ENCODE measurements at regions of chr6 and their contacts with region 1.

Region 1: DNA sequence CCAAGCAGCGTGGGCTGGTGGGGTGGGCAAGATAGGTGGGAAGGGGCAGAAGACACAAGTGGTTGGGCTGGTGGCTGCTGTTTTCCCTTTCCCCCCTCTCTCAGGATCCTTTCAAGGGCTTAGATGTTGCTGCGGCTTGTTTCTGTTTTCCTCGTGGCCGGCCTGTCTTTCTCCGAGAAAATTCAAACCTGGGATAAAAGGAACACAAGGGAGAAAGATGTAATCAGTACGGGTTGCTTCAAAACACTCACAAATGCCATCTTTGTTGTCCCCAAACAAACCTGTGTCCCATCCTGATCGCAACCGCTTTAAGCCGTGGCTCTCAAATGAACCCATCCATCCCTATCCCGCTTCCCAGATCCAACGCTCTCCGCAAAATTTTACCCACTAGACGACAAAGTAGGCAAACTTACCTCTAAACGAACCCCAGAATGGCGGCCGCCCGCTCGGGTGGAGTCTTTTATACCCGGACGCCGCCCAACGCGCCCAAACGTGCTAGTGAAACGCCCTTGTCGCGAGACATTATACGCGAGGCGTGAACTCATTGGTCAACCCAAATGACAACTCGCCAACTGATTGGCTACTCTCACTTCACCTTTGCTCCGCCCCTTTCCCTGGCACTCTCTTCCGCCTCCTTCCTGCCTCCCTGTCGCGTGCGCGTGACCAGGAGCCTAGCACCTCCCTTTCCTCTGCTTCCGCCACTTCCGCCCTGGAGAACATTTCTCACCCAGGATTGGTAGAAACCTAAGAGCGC is at the start of gene PPP1R10:
- DNase-seq: peak; percentile 86
- ATAC-seq: peak; percentile 77
- H3K4me3 Mint-ChIP-seq: peak within 1 kb of the TSS; percentile 99
- H3K27ac Mint-ChIP-seq: peak within 1 kb of the TSS; percentile 99
- H3K4me1 Mint-ChIP-seq: peaks cover 35% of the 10 kb centered on the region
- H3K27me3 Mint-ChIP-seq: no peaks in the 10 kb centered on the region
- CTCF ChIP-seq: no peak
- total RNA-seq, gene PPP1R10: 85.6 and 112 TPM in 2 replicates

Region 2: DNA sequence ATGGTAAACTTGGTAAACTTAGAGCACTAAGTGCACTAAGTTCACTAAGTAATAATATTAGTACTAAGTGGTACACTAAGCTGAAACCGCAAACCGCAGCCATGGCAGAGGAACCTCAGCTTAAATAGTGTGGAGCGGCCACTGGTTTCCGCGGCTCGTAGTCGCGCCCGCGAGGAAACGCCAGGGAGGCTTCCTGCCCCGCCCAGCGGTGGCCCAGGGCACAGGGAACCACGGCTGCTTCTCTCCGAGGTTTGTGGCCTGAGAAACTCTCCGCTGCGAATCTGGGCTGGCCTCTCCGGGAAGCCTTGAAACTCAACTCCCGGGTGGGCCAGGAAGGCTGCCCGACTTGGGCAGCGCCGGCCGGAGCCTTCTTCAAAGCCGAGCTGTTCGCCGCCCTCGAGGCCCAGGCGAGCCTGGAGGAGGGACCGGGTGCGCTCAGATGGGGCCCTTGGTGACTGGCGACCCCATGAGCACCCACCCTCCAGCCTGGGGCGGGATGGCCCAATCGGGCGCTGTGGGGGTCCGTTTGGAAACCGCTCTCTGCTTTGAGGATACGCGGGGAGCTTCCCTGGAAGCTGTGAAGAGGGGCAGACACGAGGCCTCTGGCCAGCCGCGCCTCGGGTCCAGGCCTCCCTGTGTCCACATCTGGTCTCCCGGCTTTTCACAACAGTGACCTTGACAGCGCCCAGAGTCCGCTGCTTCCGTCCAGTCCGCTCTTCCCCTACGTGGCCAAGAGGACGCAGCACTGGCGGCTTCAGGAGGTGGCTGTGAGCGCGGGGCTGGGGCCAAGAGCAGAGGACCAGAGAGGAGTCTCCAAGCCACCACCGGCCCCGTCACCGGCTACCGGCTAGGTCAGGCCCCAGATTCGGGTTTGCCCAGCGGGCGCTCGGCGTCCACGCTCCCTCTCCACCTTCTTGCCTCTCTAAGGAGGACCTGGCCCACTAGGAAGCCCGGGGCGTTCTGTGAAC is 153.1 kb before region 1 on chr6:
- CTCF ChIA-PET with region 1: no interaction called
- POLR2A ChIA-PET with region 1: interaction called, 10 read pairs
- intact Hi-C with region 1: no loop called
- DNase-seq: peak; percentile 46
- ATAC-seq: peak; percentile 48
- H3K4me3 Mint-ChIP-seq: peak overlapping the region; percentile 58
- H3K27ac Mint-ChIP-seq: no peak overlapping the region
- H3K4me1 Mint-ChIP-seq: peaks cover 37% of the 10 kb centered on the region
- H3K27me3 Mint-ChIP-seq: peaks cover 68% of the 10 kb centered on the region
- CTCF ChIP-seq: no peak

Region 3: DNA sequence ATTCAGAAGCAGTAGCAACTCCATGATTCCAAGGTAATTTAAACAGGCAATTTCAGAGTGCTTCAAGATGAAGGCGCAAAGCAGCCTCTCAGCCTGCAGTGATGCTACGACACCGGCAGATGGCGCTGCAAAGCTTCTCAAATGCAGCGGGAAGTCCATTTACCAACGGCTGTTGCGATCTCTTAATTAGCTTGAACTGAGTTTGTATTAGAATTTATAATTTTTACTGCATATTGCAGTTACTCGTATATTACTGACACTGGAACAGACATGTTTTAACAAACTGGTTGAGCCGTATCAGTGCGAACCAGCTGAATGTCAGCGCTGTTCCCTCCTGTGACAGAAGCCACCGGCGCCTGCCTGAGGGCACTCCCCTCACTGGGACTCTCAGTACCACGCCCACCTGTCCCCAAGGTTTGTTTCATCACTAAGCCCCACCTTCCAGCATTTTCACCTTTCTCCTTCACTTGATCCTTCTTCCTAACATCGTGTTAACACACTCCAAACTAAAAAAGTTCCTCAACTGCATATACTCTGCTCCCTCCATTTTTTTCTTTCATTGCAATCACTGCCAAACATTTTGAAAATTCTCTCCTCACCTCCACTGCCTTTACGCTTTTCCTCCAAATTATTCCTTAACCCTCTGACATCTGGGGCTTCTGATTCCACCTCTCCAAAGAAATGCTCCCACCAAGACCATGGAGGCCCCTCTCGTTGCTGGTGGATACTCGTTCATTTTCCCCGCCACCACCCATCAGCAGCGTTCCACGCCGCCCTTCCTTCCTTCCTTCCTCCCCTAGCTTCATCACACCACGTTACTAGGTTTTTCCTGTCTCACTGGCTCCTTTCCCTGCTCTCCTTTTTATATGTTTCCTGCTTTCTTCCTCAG is 75.2 kb before region 1 on chr6:
- CTCF ChIA-PET with region 1: interaction called, 7 read pairs
- POLR2A ChIA-PET with region 1: interaction called, 29 read pairs
- intact Hi-C with region 1: no loop called
- DNase-seq: peak; percentile 65
- ATAC-seq: peak; percentile 84
- H3K4me3 Mint-ChIP-seq: peak overlapping the region; percentile 81
- H3K27ac Mint-ChIP-seq: peak overlapping the region; percentile 81
- H3K4me1 Mint-ChIP-seq: peaks cover 30% of the 10 kb centered on the region
- H3K27me3 Mint-ChIP-seq: no peaks in the 10 kb centered on the region
- CTCF ChIP-seq: peak; percentile 98

Region 4: DNA sequence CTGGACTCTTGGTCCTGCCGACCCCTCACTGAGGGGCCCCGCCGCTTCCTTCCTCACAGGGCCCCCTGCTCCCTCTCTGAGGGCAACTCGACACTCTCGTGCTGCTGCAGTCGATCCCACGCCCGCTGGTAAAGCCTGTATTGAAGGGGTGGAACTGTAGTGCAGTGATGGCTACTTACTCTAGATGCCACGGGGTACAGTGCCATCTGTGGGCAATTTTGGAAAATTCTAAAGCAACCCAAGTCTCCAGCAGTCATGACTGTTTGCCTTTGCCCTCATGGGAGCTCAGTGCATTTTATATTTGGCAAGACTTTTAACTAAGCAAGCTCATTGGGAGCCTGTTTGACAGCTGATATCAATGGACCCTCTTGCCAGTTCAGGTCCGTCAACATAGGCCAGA is 23.5 kb after region 1 on chr6:
- CTCF ChIA-PET with region 1: no interaction called
- POLR2A ChIA-PET with region 1: interaction called, 12 read pairs
- intact Hi-C with region 1: no loop called
- DNase-seq: no peak
- ATAC-seq: no peak
- H3K4me3 Mint-ChIP-seq: no peak overlapping the region
- H3K27ac Mint-ChIP-seq: no peak overlapping the region
- H3K4me1 Mint-ChIP-seq: peaks cover 5% of the 10 kb centered on the region
- H3K27me3 Mint-ChIP-seq: no peaks in the 10 kb centered on the region
- CTCF ChIP-seq: no peak

Region 5: GRCh38 chr6:30686908-30687658 is 70.1 kb after region 1 on chr6:
- CTCF ChIA-PET with region 1: no interaction called
- POLR2A ChIA-PET with region 1: interaction called, 58 read pairs
- intact Hi-C with region 1: loop called (anchors 2 kb)
- DNase-seq: peak; percentile 82
- ATAC-seq: peak; percentile 56
- H3K4me3 Mint-ChIP-seq: peak overlapping the region; percentile 92
- H3K27ac Mint-ChIP-seq: peak overlapping the region; percentile 99
- H3K4me1 Mint-ChIP-seq: peaks cover 78% of the 10 kb centered on the region
- H3K27me3 Mint-ChIP-seq: no peaks in the 10 kb centered on the region
- CTCF ChIP-seq: no peak

Region 6: GRCh38 chr6:31158140-31158862 is 541.3 kb after region 1 on chr6 and contains the start of gene TCF19:
- CTCF ChIA-PET with region 1: no interaction called
- POLR2A ChIA-PET with region 1: interaction called, 20 read pairs
- intact Hi-C with region 1: no loop called
- DNase-seq: peak; percentile 98
- ATAC-seq: peak; percentile 91
- H3K4me3 Mint-ChIP-seq: peak within 1 kb of the TSS; percentile 95
- H3K27ac Mint-ChIP-seq: peak within 1 kb of the TSS; percentile 90
- H3K4me1 Mint-ChIP-seq: peaks cover 34% of the 10 kb centered on the region
- H3K27me3 Mint-ChIP-seq: no peaks in the 10 kb centered on the region
- CTCF ChIP-seq: no peak
- total RNA-seq, gene TCF19: 17.3 TPM in 2 replicates